ENCODE measurements at regions of chr11 and their contacts with region 1.

Region 1: DNA sequence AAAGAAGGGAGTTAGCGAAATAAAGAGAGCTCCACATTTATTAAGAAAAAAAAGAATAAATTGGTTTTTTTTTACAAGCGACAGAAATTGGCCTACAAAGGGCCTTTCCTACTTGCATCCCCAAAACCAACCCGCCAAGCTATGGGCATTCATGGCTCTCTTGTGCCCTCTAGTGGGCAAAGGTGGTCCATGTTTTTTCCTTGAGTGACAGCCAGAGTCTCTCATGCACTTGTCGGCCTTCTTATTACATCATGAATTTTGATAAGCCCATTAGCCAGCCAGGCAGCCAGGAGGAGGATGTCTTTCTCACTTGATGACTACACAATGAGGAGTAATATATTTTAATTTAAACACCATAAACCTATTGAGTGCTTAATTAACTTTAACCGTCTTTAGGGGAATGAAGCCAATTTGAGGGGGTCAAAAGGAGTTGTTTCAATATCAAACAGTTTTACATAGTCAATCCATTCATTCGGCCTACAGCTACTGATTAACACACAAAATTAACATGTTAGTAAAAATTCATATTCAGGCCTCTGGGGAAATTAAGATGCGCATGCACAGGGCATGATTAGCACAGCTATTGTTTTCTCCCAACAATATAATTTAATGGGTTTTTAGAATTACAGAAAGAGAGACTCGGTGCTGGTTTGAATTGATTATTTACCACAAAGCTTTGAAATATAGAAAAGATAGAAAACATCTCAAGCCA is 85.5 kb downstream of the RCN1 start:
- DNase-seq: peak; percentile 66 to 77 (median 74)
- H3K4me3 ChIP-seq: no peak overlapping the region
- H3K4me3 Mint-ChIP-seq: no peak overlapping the region
- H3K27ac ChIP-seq: no peak overlapping the region
- H3K27ac Mint-ChIP-seq: no peak overlapping the region
- H3K4me1 ChIP-seq: no peaks in the 10 kb centered on the region
- H3K4me1 Mint-ChIP-seq: peaks cover 1 to 9% (median 4%) of the 10 kb centered on the region in 4 donors
- H3K27me3 ChIP-seq: no peaks in the 10 kb centered on the region
- H3K27me3 Mint-ChIP-seq: peaks cover 2 to 17% of the 10 kb centered on the region in 2 donors

Region 2: DNA sequence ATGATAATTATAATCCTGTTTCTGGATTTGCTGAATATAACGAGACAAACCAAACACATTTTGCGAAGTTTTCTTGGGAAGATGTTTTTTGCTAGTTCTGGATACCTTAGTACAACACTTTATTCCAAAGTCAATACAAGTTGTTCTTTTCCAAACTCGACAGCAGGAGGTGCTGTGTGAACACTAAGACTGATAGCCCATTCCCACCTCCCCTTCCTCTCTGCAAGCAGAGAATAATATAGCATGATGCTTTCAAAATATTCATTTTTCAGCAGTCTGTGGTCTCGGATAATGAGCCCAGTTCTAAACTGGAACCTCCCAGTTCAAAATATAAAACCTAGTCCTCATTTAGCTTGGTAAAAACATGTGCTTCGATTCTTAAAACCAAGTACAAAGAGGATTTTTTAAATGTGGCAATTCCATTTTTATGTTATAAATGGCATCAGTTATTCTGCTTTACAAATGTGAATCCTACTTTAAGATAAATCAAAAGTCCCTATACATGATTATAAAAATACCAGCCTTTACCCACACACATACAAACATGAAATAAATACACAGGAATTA is 936.0 kb before region 1 on chr11:
- CTCF ChIA-PET with region 1: interaction called, 18 read pairs
- POLR2A ChIA-PET with region 1: no interaction called
- intact Hi-C with region 1: loop called (anchors 1 kb)
- DNase-seq: peak in 4 of 5 donors; percentile 7 to 29 (median 23)
- H3K4me3 ChIP-seq: no peak overlapping the region
- H3K4me3 Mint-ChIP-seq: no peak overlapping the region
- H3K27ac ChIP-seq: no peak overlapping the region
- H3K27ac Mint-ChIP-seq: no peak overlapping the region
- H3K4me1 ChIP-seq: no peaks in the 10 kb centered on the region
- H3K4me1 Mint-ChIP-seq: no peaks in the 10 kb centered on the region
- H3K27me3 ChIP-seq: no peaks in the 10 kb centered on the region
- H3K27me3 Mint-ChIP-seq: peaks cover 0 to 3% of the 10 kb centered on the region in 2 donors

Region 3: DNA sequence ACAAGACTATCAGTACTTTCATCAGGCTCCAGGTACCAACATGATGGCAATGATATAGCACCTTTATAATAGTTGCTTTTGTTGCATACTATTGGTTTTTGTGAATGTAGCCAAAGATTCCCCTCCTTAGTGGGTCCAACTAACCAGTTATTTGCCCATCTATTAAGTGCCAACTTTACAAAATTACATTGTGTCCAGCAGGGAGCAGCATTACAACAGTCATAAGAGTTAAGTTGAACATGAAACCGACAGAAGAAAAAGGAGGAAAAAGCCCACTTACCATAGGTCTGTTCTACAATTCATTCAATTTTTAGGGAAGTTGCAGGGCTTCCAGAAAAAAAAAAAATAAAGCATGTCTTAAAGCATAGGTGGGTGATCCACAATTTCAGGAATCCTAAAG is 688.5 kb before region 1 on chr11:
- CTCF ChIA-PET with region 1: no interaction called
- POLR2A ChIA-PET with region 1: no interaction called
- intact Hi-C with region 1: loop called (anchors 5 kb)
- DNase-seq: peak in 1 of 5 donors; percentile 11
- H3K4me3 ChIP-seq: no peak overlapping the region
- H3K4me3 Mint-ChIP-seq: no peak overlapping the region
- H3K27ac ChIP-seq: no peak overlapping the region
- H3K27ac Mint-ChIP-seq: peak overlapping the region in 1 of 7 donors; percentile 22
- H3K4me1 ChIP-seq: no peaks in the 10 kb centered on the region
- H3K4me1 Mint-ChIP-seq: peaks cover 9 to 23% (median 17%) of the 10 kb centered on the region in 4 donors
- H3K27me3 ChIP-seq: no peaks in the 10 kb centered on the region
- H3K27me3 Mint-ChIP-seq: no peaks in the 10 kb centered on the region

Region 4: DNA sequence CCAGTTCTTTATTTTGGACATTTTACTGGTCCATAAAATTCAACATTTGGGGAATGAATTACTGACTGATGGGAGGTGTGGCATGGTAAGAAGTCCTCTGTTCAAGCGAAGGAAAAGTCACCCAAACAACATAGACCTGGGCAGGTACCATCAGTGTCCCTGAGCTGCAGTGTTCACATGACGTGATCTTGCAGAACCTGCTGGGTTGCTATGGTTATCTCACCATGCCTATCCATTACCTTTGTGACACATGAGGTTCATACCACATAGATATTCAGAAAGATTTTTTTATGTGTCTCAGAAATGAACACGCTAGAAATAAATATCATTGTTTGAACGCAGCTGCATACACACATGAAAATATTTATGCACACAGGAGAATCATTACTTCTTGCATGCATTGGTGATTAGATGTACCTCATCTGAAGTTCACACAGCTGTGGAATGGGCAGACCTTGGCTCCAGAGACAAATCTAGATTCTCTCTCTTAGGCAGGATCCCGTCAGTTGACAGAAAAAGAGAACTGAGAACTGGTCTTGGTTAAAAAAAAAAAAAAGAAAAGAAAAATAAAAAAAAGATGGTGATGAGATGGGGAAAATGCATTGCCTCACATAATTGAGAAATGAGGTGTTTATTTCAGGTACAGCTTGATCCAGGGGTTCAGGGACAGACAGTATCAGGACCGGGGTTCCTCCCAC is 106.9 kb before region 1 on chr11:
- CTCF ChIA-PET with region 1: interaction called, 11 read pairs
- POLR2A ChIA-PET with region 1: no interaction called
- intact Hi-C with region 1: no loop called
- DNase-seq: no peak
- H3K4me3 ChIP-seq: no peak overlapping the region
- H3K4me3 Mint-ChIP-seq: no peak overlapping the region
- H3K27ac ChIP-seq: no peak overlapping the region
- H3K27ac Mint-ChIP-seq: no peak overlapping the region
- H3K4me1 ChIP-seq: no peaks in the 10 kb centered on the region
- H3K4me1 Mint-ChIP-seq: no peaks in the 10 kb centered on the region
- H3K27me3 ChIP-seq: peaks cover 4% of the 10 kb centered on the region
- H3K27me3 Mint-ChIP-seq: peaks cover 34 to 38% of the 10 kb centered on the region in 2 donors